Left colon (tissue), 2 donors: ENCODE measurements at regions of chr2 and their contacts with region 1.

Region 1: DNA sequence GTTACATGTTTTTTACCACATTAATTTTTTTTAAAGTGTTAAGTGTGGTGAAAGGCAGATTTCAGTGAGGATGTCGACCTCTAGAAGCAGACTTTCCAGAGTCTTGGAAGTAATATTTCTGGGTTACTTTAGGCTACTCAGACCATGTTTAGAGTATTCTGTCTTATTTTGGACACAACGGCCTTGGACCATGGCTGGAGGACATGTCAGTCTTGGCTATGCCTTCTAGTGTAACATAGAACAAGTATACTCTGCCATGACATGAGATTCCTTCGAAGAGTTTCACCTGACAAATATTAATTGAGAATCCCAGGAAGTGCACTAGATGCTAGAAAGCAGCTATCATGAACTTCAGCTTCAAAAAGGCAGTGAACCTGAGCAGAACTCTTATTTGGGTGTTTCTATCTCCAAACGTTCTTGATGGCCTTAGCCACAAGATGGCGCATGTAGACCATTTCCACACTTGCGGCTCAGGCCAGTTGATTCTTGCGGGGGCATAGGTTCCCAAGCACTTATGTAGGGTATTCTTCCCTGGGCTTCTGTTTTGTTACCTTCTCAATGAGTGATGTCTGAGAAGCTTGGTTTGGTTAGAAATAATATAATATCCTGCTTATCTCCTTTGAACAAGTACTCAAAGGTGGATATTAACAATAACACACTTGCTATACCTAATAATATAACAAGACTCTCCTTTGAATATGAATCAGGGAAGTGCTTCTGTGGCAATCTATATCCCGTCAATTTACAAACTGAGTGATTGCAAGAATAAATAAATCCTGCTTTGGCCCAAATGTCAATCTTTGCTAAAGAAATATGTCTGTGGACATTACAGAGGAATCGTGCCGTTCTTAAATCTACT is 62.0 kb downstream of the CACNB4 start:
- DNase-seq: peak; percentile 49 to 73
- ATAC-seq: peak; percentile 48

Region 2: GRCh38 chr2:152171436-152172117 is 134.7 kb after region 1 on chr2:
- intact Hi-C with region 1: loop called in 1 of 2 experiments (anchors 5 kb)
- DNase-seq: peak in 1 of 2 donors; percentile 11
- ATAC-seq: peak; percentile 24

Region 3: GRCh38 chr2:152284398-152284797 is 247.6 kb after region 1 on chr2:
- intact Hi-C with region 1: no loop called
- DNase-seq: no peak
- ATAC-seq: no peak

Region 4: DNA sequence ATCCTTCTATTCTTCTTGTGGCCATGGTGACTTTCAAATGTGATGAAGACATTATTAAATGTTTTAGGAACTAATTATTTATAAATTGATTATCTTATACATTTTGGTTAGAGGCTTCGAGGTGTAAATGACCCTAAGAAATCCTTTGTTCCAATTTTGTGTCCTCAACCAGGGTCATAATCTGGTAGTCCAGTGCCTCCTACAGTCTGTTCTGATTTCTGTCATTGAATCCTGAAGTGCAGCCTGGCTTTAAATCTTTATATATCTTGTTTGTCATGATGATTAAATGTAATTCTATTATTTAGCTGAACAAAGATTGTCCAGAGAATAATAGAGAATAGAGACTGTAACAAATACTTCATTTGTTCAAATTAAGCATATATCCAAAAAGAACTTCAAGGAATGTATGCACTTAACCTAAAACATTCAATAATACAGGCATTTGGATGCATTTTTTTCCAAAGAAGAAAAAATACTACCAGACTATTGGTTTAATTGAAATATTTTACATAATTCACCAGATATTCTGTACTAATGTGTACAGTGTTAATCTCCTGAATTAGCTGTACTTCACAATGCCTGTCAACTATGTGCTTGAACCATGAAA is 590.6 kb after region 1 on chr2:
- intact Hi-C with region 1: loop called in 1 of 2 experiments (anchors 10 kb)
- DNase-seq: no peak
- ATAC-seq: peak; percentile 79